ENCODE measurements at regions of chr12 and their contacts with region 1.

Region 1: DNA sequence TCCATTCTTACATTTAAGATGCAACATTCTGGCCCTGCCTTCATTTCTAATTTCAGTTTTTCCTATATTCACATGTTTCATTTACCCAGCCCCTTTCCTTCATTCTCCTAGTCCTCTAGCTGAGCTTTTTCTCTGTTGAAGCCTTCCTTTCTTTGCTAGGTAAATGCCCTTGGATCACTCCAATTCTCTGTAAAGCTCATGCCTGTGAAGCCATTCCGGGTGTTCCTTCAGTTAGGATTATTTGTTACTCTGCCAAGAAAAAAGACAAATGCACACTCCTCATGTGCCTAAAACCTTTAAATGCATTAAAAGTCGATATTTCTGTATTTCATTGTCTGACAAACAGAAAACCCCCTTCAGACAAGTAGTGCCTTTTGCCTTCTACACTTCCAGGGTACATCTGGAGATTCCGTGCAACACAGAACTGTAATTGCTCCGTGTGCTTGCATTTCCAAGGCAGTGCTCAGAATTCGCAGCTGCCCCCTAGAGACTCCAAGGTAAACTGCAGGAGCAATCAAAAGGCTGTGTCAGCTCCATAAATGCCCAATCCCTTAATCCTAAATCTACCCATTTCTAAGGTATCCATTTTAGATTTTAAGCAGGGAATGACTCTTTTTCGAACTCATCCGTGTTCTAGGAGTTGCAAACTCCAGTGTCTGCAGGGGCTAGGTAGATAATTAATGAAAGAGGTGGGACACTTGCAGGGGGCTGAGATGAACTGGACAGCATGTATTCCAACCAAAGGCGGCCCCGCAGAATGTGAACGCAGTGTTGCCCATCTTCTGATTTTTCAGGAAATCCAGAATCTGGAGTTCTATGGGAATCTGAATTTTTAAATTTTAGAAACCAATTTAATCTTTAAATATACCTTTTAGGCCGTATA is 320.2 kb downstream of the GRIN2B start:
- DNase-seq: no peak
- ATAC-seq: peak; percentile 73

Region 2: DNA sequence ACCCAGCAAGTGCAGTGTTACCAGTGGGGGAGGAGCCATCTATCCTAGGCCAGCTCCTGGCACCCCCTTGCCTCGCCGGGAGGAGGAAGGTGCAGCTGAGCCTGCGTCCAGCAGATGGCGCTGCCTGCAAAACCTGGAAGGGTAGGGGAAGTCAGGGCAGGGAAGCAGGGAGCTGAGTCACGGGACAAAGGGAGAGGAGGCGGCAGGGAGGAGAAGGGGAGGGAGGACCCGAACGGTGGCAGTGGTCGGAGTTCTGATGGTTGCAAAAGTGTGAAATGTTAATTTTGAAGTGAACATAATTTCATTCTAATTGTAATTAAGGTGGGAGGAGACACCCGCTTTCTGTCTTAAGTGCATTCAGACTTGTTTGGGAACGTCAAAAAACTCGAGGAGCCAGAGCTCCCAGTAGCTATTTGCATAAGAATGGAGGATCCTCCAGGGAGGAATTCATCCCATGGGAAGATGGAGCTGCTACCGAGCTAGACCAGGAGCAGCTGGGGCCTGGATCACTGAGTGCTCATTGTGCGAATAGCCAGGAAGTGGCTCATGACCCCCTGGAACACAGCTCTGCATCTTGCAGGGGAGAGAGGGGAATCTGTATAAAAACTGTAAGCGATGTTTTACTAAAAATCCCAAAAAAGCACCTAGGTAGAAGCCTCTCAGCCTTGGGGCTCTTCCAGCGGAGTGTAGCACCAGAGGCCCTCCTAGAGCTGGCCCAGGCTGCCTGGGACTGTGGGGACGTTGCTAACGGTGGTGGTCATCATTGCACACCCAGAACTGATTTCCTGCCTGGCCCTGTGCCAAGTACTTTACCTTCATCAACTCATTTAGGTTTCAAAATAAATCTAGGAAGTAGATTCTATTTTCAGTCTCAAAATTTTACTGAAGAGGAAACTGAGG is 405.2 kb before region 1 on chr12:
- intact Hi-C with region 1: loop called (anchors 5 kb)
- DNase-seq: peak; percentile 96
- ATAC-seq: peak; percentile 98

Region 3: DNA sequence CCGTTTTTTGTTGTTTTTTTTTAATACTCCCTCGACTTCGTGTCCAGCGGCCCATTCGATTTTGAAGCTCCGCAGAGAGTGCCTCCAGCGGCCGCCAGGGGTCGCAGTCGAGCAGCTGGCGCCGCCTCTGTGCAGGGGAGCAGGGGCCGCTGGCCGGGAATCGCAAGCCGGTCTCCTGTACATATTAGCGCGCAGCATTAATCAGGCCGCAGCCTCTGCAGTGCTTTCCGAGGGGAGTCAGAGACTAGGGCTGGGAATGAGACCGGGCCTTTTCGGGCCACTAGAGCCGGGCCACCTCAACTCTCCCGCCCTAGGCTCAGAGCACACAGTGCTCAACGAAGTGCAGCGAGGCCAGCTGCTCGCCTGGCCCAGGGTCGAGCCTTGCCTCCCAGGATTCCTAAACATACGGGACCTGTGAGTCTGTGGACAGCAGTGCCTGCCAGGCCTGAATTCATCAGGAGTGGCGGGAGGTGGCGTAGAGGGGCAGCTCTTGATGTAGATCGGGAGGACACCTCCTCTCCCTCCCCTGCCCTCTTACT is 382.9 kb before region 1 on chr12:
- intact Hi-C with region 1: loop called (anchors 5 kb)
- DNase-seq: peak; percentile 85
- ATAC-seq: peak; percentile 95

Region 4: DNA sequence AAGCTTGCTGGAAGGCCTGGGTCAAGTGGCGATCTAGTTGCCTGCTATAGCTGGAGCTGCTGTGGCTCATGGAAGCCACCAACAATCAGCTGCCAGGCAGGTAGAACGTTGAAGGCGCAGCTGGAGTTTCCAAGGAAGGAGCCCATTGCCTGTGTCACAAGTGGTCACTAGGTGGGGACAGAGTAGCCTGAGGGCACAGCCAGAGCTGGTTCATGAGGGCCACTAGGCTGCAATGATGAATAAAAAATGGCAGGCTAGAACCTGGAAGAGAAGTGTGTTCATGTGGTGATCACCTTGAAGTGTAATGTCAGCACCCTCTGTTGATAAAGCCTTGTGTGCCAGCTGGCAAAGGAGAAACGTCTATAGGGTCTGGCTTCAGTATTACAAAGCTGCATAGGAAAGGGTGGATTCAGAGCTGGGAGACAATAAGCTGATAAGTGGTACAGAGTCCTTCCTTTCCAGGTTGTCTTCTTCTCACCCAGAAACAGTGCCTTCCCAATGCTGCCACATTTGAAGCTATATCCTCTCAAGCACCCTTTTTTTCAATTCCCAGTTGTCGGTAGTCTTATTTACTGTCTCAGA is 298.9 kb before region 1 on chr12:
- intact Hi-C with region 1: loop called (anchors 1 kb)
- DNase-seq: peak; percentile 63
- ATAC-seq: peak; percentile 71

Region 5: GRCh38 chr12:13534645-13535398 is 126.4 kb before region 1 on chr12:
- intact Hi-C with region 1: loop called (anchors 10 kb)
- DNase-seq: peak; percentile 71
- ATAC-seq: peak; percentile 75

Region 6: DNA sequence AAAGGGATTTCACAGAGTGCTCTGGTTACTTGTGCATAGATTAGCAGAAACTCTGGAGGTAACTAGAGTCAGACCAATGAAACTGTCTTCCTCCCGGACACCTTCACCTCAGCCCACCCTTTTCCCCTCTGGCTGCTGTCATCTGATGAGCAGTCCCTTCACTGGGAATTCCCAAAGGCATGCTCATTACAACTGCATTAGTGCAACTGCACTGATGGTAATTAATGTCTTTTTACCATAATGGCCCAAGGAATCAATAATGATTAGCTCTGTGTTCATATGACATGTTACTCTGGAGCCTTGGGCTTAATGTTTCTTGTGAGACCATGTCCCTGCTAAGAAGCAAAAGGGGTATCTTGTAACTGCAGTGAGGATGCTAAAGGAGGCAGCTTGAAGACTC is 15.6 kb after region 1 on chr12:
- intact Hi-C with region 1: no loop called
- DNase-seq: no peak
- ATAC-seq: no peak

Measured in Right ventricle myocardium inferior (tissue), 1 donor.